ENCODE measurements at regions of chr17 and their contacts with region 1.

Region 1: GRCh38 chr17:3512505-3513171 is 36.8 kb downstream of the ASPA start:
- DNase-seq: peak; percentile 7 to 51
- H3K4me3 ChIP-seq: no peak overlapping the region
- H3K4me1 ChIP-seq: no peaks in the 10 kb centered on the region; the same call in 1 of the 2 replicates
- H3K27me3 ChIP-seq: no peaks in the 10 kb centered on the region

Region 2: DNA sequence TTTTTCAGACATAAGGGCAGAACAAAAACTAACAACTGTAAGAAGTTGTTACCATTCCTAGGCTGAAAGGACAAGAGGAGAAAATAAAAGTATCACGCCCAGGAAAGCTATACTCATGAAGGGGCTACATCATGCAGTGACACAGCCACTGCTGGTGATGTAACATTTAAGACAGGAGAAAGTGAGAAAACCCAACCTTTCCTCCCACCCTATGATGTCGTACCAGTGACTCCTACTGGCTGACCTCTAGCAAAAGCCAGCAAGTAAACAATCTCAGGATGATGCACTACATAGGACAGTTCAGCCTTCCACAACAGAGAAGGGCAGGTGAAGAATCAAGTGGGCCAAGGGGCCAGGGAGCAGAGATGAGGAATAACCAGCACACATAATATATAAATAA is 65.0 kb before region 1 on chr17:
- in situ Hi-C with region 1: loop called (anchors 10 kb)
- DNase-seq: no peak
- H3K4me3 ChIP-seq: no peak overlapping the region
- H3K4me1 ChIP-seq: no peaks in the 10 kb centered on the region
- H3K27me3 ChIP-seq: no peaks in the 10 kb centered on the region

Region 3: GRCh38 chr17:3469529-3469928 is 43.1 kb before region 1 on chr17:
- in situ Hi-C with region 1: no loop called
- DNase-seq: no peak
- H3K4me3 ChIP-seq: no peak overlapping the region
- H3K4me1 ChIP-seq: no peaks in the 10 kb centered on the region
- H3K27me3 ChIP-seq: no peaks in the 10 kb centered on the region

Region 4: DNA sequence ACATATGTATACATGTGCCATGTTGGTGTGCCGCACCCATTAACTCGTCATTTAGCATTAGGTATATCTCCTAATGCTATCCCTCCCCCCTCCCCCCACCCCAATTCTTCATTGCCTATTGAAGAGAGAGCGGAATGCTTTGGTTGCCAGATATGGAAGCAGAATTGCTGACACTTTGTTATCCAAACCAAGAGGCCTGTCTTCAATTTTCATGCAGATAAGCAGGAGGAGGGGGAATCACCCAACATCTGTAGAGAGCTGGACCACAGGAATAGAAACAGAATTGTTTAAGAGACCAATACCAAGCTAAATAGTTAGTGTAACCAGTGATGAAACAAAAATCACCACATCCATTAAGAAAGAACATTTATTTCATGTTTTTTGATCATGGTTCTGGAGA is 29.8 kb before region 1 on chr17:
- in situ Hi-C with region 1: loop called (anchors 5 kb)
- DNase-seq: no peak
- H3K4me3 ChIP-seq: no peak overlapping the region
- H3K4me1 ChIP-seq: no peaks in the 10 kb centered on the region
- H3K27me3 ChIP-seq: peaks cover 20% of the 10 kb centered on the region

Region 5: DNA sequence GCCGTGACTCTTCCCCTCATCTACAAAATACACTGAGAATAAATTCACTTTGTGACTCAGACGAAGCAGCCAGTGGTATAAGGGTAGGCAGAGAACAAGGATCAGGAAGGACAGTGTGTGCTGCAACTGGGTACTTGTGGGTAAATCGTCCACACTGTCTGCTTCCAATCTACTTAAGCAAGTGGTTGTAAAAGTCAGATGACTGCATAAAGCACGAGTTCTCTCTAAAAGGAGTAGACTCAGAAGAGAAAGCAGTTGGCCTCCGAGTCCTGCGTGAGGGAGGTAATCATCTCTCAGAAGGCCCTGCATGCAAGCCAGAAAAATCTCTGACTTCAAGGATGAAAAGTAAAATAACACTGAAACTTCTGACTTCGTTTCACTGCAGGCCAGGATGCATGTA is 708.0 kb after region 1 on chr17:
- in situ Hi-C with region 1: no loop called
- DNase-seq: no peak
- H3K4me3 ChIP-seq: no peak overlapping the region
- H3K4me1 ChIP-seq: peaks cover 6% of the 10 kb centered on the region
- H3K27me3 ChIP-seq: no peaks in the 10 kb centered on the region

Measured in HAP-1 (cell line).